K562 (cell line): ENCODE measurements at regions of chrX and their contacts with region 1.

Region 1: DNA sequence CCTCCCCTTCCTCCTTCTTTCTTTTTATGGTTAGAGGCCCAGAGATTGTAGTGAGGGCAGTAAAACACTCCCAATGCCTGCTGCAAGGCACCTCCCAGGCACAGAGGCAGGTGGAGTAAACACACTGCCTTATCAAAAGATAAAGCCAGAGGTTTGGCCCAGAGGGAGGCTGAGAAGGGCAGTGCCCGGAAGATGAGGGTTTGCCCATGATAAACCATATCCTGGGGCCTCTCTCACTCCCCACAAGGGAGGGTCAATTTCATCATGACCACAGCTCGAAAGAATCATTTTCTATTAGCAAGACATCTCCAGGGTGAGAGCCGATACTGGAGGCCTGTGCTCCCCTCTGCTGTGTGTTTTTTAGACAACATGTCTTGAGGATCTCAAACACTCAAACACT is 98.5 kb upstream of the FAM9C start:
- DNase-seq: no peak
- ATAC-seq: no peak
- H3K4me3 ChIP-seq: no peak overlapping the region
- H3K27ac ChIP-seq: no peak overlapping the region
- H3K4me1 ChIP-seq: peaks cover 0 to 4% of the 10 kb centered on the region in 2 experiments; a peak in 1 of 5 replicates
- H3K27me3 ChIP-seq: no peaks in the 10 kb centered on the region
- CTCF ChIP-seq: no peak
- EP300 ChIP-seq: no peak
- POLR2A ChIP-seq: no peak
- RAD21 ChIP-seq: peak in 1 of 2 experiments; percentile 16; a peak in 1 of 4 replicates

Region 2: DNA sequence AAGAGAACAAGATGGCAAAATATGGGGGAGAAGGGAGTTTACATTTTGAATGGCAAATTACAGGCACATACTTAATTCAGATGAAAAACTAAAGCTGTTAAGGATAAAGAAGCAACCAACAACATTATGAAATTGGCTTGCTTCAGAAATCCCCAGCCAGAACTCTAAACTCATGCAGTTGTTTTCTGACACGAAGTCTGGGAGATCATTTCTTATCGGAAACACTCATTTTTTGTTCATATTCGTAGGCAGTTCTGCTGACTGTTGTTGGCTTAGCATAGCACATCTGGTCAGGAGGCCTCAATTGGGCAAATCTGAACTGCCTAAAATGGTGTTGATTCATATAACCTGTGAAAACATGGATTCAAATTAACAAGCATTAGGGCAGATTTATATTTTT is 1444.2 kb before region 1 on chrX:
- CTCF ChIA-PET with region 1: no interaction called
- POLR2A ChIA-PET with region 1: no interaction called
- in situ Hi-C with region 1: loop called (anchors 10 kb)
- intact Hi-C with region 1: no loop called
- DNase-seq: no peak
- ATAC-seq: no peak
- H3K4me3 ChIP-seq: no peak overlapping the region
- H3K27ac ChIP-seq: no peak overlapping the region
- H3K4me1 ChIP-seq: no peaks in the 10 kb centered on the region
- H3K27me3 ChIP-seq: peaks cover 0 to 6% of the 10 kb centered on the region in 2 experiments; a peak in 1 of 5 replicates
- CTCF ChIP-seq: no peak
- EP300 ChIP-seq: no peak
- POLR2A ChIP-seq: no peak
- RAD21 ChIP-seq: no peak